Mammary epithelial cell (primary cell): ENCODE measurements at regions of chr12 and their contacts with region 1.

Region 1: GRCh38 chr12:87066326-87066725 is 810.1 kb upstream of the MGAT4C start:
- DNase-seq: no peak
- H3K4me3 ChIP-seq: no peak overlapping the region
- H3K27ac ChIP-seq: no peak overlapping the region
- H3K4me1 ChIP-seq: no peaks in the 10 kb centered on the region
- H3K27me3 ChIP-seq: no peaks in the 10 kb centered on the region
- CTCF ChIP-seq: no peak

Region 2: DNA sequence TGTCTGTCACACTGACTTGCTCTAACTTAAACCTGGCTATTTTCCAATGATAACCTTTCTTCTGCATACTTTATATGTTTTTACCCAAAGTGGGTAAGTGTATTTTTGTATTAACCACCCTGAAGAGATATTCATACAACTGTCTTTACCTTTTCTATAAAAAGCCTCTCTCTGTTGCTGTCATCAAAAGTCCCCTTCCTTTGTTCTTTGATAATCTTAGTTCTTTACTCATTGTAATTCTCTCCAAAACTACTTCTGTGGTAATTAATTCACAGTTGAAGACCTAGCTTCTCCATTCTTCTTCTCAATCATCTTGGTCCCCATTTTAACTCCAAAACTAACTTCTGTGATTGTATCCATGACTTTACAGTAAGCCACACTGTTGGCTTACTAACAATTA is 330.5 kb before region 1 on chr12:
- CTCF ChIA-PET with region 1: no interaction called
- dilution Hi-C with region 1: no loop called
- in situ Hi-C with region 1: no loop called
- intact Hi-C with region 1: no loop called
- DNase-seq: no peak
- H3K4me3 ChIP-seq: no peak overlapping the region
- H3K27ac ChIP-seq: no peak overlapping the region
- H3K4me1 ChIP-seq: no peaks in the 10 kb centered on the region
- H3K27me3 ChIP-seq: no peaks in the 10 kb centered on the region
- CTCF ChIP-seq: no peak

Region 3: DNA sequence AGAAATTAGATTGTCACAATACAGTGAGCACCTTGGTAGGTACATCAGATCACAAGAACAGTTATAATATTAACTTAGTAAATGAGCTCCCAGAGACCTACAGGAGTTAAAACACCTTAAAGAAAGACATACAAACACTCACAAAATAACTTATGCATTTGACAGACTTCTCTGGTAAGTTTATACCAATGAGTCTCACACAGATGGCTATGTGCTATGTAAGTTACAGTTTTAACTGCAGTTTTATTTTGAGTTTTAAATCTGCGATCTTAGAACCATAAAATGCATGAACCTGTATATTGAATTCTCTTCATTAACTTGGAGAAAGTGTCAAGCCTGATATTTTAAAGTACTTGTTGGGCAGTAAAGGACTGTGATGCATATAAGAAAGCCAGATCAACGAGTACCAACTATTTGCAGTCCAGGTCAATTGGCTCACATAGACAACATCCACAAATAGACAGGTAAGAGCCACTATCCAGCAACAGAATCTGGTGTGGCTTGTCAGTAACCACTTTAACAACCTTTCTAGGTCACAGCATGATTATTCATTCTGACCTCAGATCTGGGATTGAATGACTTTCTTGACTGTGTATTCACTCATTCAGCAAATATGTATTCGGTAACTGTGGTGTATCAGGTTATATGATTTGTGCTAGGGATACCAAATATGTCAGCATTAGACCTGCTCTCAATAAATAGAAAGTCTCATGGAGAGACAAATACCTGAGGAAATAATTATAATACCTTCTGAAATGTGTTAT is 46.4 kb after region 1 on chr12:
- CTCF ChIA-PET with region 1: no interaction called
- dilution Hi-C with region 1: no loop called
- in situ Hi-C with region 1: no loop called
- intact Hi-C with region 1: no loop called
- DNase-seq: peak; percentile 84
- H3K4me3 ChIP-seq: no peak overlapping the region
- H3K27ac ChIP-seq: no peak overlapping the region
- H3K4me1 ChIP-seq: no peaks in the 10 kb centered on the region
- H3K27me3 ChIP-seq: no peaks in the 10 kb centered on the region
- CTCF ChIP-seq: no peak

Region 4: GRCh38 chr12:87171356-87171755 is 105.0 kb after region 1 on chr12:
- CTCF ChIA-PET with region 1: no interaction called
- dilution Hi-C with region 1: loop called (anchors 5 kb)
- in situ Hi-C with region 1: no loop called
- intact Hi-C with region 1: no loop called
- DNase-seq: no peak
- H3K4me3 ChIP-seq: no peak overlapping the region
- H3K27ac ChIP-seq: no peak overlapping the region
- H3K4me1 ChIP-seq: no peaks in the 10 kb centered on the region
- H3K27me3 ChIP-seq: no peaks in the 10 kb centered on the region
- CTCF ChIP-seq: no peak